Endothelial cell of umbilical vein (primary cell): ENCODE measurements at regions of chr13 and their contacts with region 1.

Region 1: GRCh38 chr13:40445557-40445990 is 220.9 kb downstream of the FOXO1 start:
- DNase-seq: peak; percentile 99
- H3K4me3 ChIP-seq: no peak overlapping the region
- H3K27ac ChIP-seq: peak overlapping the region; percentile 99
- H3K4me1 ChIP-seq: peaks cover 36% of the 10 kb centered on the region
- H3K27me3 ChIP-seq: no peaks in the 10 kb centered on the region
- CTCF ChIP-seq: no peak
- POLR2A ChIP-seq: peak; percentile 42

Region 2: GRCh38 chr13:39783050-39783449 is 662.5 kb before region 1 on chr13:
- CTCF ChIA-PET with region 1: interaction called, 3 read pairs
- POLR2A ChIA-PET with region 1: no interaction called
- dilution Hi-C with region 1: no loop called
- intact Hi-C with region 1: loop called (anchors 1 kb)
- DNase-seq: peak; percentile 80
- H3K4me3 ChIP-seq: no peak overlapping the region
- H3K27ac ChIP-seq: no peak overlapping the region
- H3K4me1 ChIP-seq: peaks cover 62% of the 10 kb centered on the region
- H3K27me3 ChIP-seq: no peaks in the 10 kb centered on the region
- CTCF ChIP-seq: no peak
- POLR2A ChIP-seq: no peak

Region 3: GRCh38 chr13:40069173-40070044 is 376.2 kb before region 1 on chr13:
- CTCF ChIA-PET with region 1: interaction called, 4 read pairs
- POLR2A ChIA-PET with region 1: no interaction called
- dilution Hi-C with region 1: no loop called
- intact Hi-C with region 1: loop called (anchors 1 kb)
- DNase-seq: peak; percentile 69
- H3K4me3 ChIP-seq: no peak overlapping the region
- H3K27ac ChIP-seq: no peak overlapping the region
- H3K4me1 ChIP-seq: peaks cover 5% of the 10 kb centered on the region
- H3K27me3 ChIP-seq: no peaks in the 10 kb centered on the region
- CTCF ChIP-seq: peak; percentile 69 to 82
- POLR2A ChIP-seq: no peak

Region 4: GRCh38 chr13:40130871-40131636 is 314.5 kb before region 1 on chr13:
- CTCF ChIA-PET with region 1: no interaction called
- POLR2A ChIA-PET with region 1: no interaction called
- dilution Hi-C with region 1: no loop called
- intact Hi-C with region 1: loop called (anchors 1 kb)
- DNase-seq: peak; percentile 93
- H3K4me3 ChIP-seq: no peak overlapping the region
- H3K27ac ChIP-seq: peak overlapping the region; percentile 60
- H3K4me1 ChIP-seq: peaks cover 13% of the 10 kb centered on the region
- H3K27me3 ChIP-seq: no peaks in the 10 kb centered on the region
- CTCF ChIP-seq: no peak
- POLR2A ChIP-seq: no peak

Region 5: GRCh38 chr13:40477623-40478608 is 32.3 kb after region 1 on chr13:
- CTCF ChIA-PET with region 1: no interaction called
- POLR2A ChIA-PET with region 1: no interaction called
- dilution Hi-C with region 1: no loop called
- intact Hi-C with region 1: loop called (anchors 1 kb)
- DNase-seq: peak; percentile 94
- H3K4me3 ChIP-seq: peak overlapping the region in 1 of 3 experiments; percentile 10
- H3K27ac ChIP-seq: peak overlapping the region; percentile 92
- H3K4me1 ChIP-seq: peaks cover 32% of the 10 kb centered on the region
- H3K27me3 ChIP-seq: no peaks in the 10 kb centered on the region
- CTCF ChIP-seq: no peak
- POLR2A ChIP-seq: peak; percentile 36

Region 6: GRCh38 chr13:40558656-40559055 is 113.1 kb after region 1 on chr13:
- CTCF ChIA-PET with region 1: no interaction called
- POLR2A ChIA-PET with region 1: no interaction called
- dilution Hi-C with region 1: no loop called
- intact Hi-C with region 1: loop called (anchors 2 kb)
- DNase-seq: peak; percentile 95
- H3K4me3 ChIP-seq: peak overlapping the region in 1 of 3 experiments; percentile 1
- H3K27ac ChIP-seq: peak overlapping the region; percentile 61
- H3K4me1 ChIP-seq: peaks cover 56% of the 10 kb centered on the region
- H3K27me3 ChIP-seq: no peaks in the 10 kb centered on the region
- CTCF ChIP-seq: no peak
- POLR2A ChIP-seq: peak; percentile 35

Region 7: DNA sequence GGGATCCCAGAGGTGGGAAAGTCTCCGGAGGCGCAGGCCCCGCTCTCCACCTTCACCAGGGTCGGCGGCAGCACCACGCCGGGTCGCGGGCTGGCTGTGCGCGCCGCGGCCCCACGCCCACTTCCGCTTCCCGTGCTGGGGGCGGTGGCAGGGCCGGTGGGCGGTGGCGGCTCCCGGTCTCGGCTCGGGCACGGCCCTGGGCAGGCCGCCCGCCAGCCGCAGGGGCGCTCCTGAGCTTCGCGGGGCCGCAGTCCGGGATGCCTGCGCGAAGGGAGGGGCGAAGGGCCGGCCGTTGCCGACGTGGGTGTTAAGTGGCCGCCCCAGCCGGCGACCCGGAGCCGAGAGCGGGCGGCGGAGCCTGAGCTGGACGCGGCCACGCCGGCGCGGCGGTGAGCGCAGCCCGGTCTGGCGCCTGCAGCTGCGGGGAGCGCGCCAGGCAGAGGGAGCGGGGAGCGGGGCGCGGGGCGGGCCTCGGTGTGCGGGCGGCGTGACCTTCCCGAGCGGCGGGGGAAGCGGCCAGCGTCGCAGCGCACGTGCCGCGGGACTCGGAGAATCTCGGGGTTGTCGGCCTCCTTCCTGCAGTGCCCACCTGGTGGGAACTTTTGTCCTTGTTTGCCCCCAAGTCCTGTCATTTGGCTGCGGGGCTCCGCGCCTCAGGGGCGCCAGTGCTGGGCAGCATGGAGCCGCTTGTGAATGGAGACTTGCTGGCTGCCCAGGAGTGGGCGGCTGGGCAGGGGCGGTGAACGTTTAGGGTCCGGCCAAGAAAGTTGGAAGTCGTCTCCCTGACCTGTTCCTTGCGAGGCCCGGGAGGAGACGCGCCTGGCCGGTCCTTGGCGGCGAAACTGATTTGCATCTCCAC is 343.9 kb after region 1 on chr13 and contains the start of gene SLC25A15:
- CTCF ChIA-PET with region 1: no interaction called
- POLR2A ChIA-PET with region 1: no interaction called
- dilution Hi-C with region 1: no loop called
- intact Hi-C with region 1: no loop called
- DNase-seq: peak; percentile 82
- H3K4me3 ChIP-seq: peak within 1 kb of the TSS; percentile 57 to 66 (median 58)
- H3K27ac ChIP-seq: peak within 1 kb of the TSS; percentile 37
- H3K4me1 ChIP-seq: peaks cover 11% of the 10 kb centered on the region
- H3K27me3 ChIP-seq: no peaks in the 10 kb centered on the region
- CTCF ChIP-seq: peak; percentile 17 to 31
- POLR2A ChIP-seq: peak; percentile 77
- total RNA-seq, gene SLC25A15: 10.8 and 11.5 TPM in 2 replicates